RWPE1 (cell line): ENCODE measurements at regions of chr3 and their contacts with region 1.

Region 1: DNA sequence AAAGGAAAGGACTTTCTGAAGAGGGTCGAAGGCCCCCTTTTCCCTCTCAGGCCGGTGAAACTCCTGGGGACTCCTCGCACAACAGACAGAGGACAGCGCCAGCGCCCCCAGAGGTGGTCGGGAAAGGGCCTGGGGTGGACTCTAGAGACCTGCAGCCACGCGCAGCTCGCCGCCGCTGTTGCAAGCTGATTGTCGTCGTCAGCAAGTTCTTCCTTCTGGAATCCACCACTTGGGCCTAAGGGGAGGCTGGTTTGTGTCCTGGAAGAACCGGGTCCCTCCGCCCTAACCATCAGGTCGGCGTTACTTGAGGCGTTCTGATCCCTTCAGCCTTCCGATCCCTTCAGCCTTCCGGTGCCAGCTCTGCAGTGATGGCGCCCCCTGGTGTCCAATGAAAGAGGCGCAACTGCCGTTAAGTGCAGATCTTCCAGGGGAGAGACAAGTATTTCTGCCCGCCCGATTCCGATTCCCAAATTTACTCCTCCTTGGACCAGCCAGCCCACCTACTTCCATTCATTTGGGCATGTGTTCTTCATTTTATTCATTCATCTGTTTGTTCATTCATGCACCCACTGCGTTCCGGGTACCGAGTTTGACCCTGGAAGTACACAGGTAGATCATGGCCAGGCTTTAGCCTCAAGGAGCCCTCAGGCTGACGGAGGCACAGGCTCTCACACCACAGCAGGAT is 77.2 kb upstream of the SLC6A11 start:
- DNase-seq: peak; percentile 42
- H3K27ac ChIP-seq: no peak overlapping the region
- CTCF ChIP-seq: peak; percentile 83

Region 2: GRCh38 chr3:10417849-10418248 is 321.0 kb before region 1 on chr3:
- CTCF ChIA-PET with region 1: interaction called, 18 read pairs
- POLR2A ChIA-PET with region 1: no interaction called
- DNase-seq: peak; percentile 13
- H3K27ac ChIP-seq: no peak overlapping the region
- CTCF ChIP-seq: no peak

Region 3: GRCh38 chr3:10764259-10765051 is 25.6 kb after region 1 on chr3:
- CTCF ChIA-PET with region 1: no interaction called
- POLR2A ChIA-PET with region 1: no interaction called
- DNase-seq: no peak
- H3K27ac ChIP-seq: no peak overlapping the region
- CTCF ChIP-seq: no peak

Region 4: DNA sequence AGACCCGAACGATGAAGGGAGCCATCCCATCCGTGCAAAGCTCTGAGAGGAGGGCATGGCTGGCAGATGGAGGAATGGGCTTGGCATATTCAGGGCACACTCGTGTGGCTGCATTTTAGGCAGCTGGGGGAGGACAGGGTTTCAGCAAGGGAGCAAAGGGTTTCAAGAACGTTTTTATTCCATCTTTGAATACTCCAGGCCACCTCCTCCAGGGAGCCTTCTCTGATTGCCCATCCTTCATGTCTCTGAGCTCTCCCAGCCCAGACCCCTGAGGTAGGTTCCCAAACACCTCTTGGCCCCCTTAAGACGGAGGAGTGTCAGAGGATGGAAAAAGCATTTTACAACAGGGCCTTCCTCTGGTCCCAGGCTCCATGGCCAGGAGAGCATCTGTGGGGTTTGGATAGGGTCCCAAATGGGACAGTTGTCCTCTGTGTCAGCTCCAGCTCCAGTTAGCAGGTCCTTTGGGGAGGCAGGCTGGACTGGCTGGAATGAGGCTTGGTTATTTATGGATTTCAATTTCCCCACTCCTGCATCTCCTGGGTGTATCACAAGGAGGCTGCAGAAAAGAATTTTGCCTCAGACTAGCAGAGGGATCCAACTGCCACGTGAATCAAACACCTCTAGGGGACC is 236.0 kb after region 1 on chr3:
- CTCF ChIA-PET with region 1: no interaction called
- POLR2A ChIA-PET with region 1: no interaction called
- DNase-seq: no peak
- H3K27ac ChIP-seq: no peak overlapping the region
- CTCF ChIP-seq: no peak